ENCODE measurements at regions of chr3 and their contacts with region 1.

Region 1: GRCh38 chr3:102018551-102018950 is 169.2 kb downstream of the NFKBIZ start:
- DNase-seq: peak; percentile 70
- ATAC-seq: peak; percentile 58
- H3K4me3 ChIP-seq: no peak overlapping the region
- H3K4me3 Mint-ChIP-seq: peak overlapping the region; percentile 4
- H3K27ac ChIP-seq: peak overlapping the region in 1 of 2 donors; percentile 65
- H3K27ac Mint-ChIP-seq: peak overlapping the region; percentile 39
- H3K4me1 ChIP-seq: peaks cover 7 to 19% of the 10 kb centered on the region in 2 donors
- H3K4me1 Mint-ChIP-seq: peaks cover 29% of the 10 kb centered on the region
- H3K27me3 ChIP-seq: no peaks in the 10 kb centered on the region
- H3K27me3 Mint-ChIP-seq: no peaks in the 10 kb centered on the region
- CTCF ChIP-seq: no peak

Region 2: DNA sequence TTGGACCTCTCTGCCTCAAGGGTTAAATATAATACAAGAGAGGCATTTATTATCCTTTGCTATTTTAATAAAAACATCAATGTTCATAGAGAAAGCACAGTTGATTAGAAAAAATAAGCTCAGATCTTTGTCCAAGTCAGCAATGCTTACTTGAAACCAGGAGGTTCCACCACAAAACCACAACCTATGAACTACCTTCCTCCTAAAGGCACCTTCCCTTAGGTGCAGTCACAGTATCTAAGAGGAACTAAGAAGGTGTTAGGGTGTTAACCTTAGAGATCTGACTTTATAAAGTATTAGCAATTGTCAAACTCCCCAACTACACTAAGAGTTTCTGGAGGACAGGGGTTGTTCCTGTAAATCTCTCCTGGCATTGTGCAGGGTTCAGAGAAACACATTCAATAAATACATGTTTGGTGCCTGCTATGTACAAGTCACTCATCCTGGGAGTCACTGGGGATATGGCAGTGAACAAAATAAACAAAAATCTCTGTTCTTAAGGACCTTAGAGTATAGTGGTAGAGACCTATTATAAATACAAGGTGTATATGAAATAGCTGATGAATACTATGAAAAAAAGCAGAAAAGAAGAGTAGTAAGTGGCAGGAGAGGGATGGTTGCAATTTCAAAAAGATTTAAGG is 39.4 kb after region 1 on chr3:
- CTCF ChIA-PET with region 1: no interaction called
- POLR2A ChIA-PET with region 1: no interaction called
- intact Hi-C with region 1: loop called (anchors 5 kb)
- DNase-seq: peak; percentile 80
- ATAC-seq: peak; percentile 82
- H3K4me3 ChIP-seq: no peak overlapping the region
- H3K4me3 Mint-ChIP-seq: peak overlapping the region; percentile 57
- H3K27ac ChIP-seq: peak overlapping the region; percentile 9 to 39
- H3K27ac Mint-ChIP-seq: peak overlapping the region; percentile 43
- H3K4me1 ChIP-seq: peaks cover 38 to 39% of the 10 kb centered on the region in 2 donors
- H3K4me1 Mint-ChIP-seq: peaks cover 34% of the 10 kb centered on the region
- H3K27me3 ChIP-seq: no peaks in the 10 kb centered on the region
- H3K27me3 Mint-ChIP-seq: no peaks in the 10 kb centered on the region
- CTCF ChIP-seq: no peak

Measured in B cell (primary cell).